AG04450 (cell line): ENCODE measurements at regions of chr5 and their contacts with region 1.

Region 1: DNA sequence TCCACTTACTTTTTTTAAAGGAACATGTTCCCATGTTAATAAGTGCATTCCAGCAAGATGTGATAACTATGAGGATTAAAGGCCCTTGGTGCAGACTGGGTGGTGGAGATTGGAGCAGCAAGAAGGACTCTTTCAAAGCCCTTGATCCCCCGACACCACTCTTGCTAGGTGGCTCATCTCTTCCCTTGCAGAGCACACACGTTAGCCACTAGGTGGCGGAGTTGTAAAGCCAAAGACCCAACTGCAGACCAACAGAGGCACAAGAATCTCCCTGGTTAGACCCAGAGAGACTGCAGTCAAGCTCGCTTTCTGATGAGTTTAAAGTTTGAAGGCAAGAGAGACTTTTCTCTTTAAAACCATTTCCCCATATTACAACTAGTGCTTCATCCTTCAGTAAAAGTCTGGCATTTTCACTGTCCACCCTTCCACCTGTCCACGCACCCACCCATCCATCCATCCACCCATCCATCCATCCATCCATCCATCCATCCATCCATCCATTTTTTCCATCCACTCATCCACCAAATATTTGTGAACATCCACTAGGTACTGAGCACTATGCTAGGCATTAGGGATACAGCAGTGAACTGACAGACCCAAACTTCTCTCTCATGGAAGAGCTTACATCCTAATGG is 226.9 kb downstream of the MSX2 start:
- DNase-seq: peak; percentile 67
- H3K4me3 ChIP-seq: no peak overlapping the region
- H3K27ac ChIP-seq: no peak overlapping the region
- H3K27me3 ChIP-seq: no peaks in the 10 kb centered on the region
- CTCF ChIP-seq: peak; percentile 93

Region 2: GRCh38 chr5:174816860-174817259 is 134.4 kb before region 1 on chr5:
- CTCF ChIA-PET with region 1: no interaction called
- POLR2A ChIA-PET with region 1: no interaction called
- DNase-seq: no peak
- H3K4me3 ChIP-seq: no peak overlapping the region
- H3K27ac ChIP-seq: no peak overlapping the region
- H3K27me3 ChIP-seq: no peaks in the 10 kb centered on the region
- CTCF ChIP-seq: peak; percentile 48

Region 3: DNA sequence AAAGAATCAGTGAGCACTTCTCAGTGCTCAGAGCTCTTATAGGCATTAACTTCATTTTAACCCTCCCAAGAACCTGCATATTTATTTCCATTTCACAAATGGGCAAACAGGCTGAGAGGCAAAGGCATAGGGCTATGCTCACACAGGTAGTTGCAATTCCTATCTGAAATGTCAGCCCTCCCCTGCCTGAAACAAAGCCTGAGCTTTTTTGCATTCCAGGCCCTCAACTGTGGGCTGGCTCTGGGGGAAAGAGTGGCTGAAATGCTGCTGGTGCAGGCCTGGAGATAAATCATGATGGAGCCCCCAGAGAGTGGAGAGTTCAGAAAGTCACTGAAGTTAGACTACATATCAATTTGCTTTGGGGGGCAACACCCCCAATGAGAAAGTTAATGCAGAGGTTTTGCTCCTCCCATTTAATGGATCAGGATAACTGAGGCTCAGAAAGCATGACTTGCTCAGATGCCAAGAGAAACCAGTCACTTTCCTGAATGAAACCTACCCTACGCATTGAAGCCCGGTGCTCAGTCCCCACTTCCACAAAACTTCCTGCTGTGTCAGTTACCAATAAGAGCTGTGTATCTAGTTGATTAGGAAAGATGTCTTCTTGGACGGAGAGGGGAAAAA is 487.1 kb after region 1 on chr5:
- CTCF ChIA-PET with region 1: interaction called, 51 read pairs
- POLR2A ChIA-PET with region 1: no interaction called
- DNase-seq: no peak
- H3K4me3 ChIP-seq: no peak overlapping the region
- H3K27ac ChIP-seq: no peak overlapping the region
- H3K27me3 ChIP-seq: peaks cover 2% of the 10 kb centered on the region
- CTCF ChIP-seq: no peak

Region 4: GRCh38 chr5:175444060-175444904 is 493.0 kb after region 1 on chr5 and contains the start of gene DRD1:
- CTCF ChIA-PET with region 1: interaction called, 51 read pairs
- POLR2A ChIA-PET with region 1: no interaction called
- DNase-seq: no peak
- H3K4me3 ChIP-seq: peak within 1 kb of the TSS; percentile 49
- H3K27ac ChIP-seq: no peak within 1 kb of the TSS
- H3K27me3 ChIP-seq: peaks cover 10% of the 10 kb centered on the region
- CTCF ChIP-seq: peak; percentile 61
- polyA plus RNA-seq, gene DRD1: 0.11 TPM in 2 replicates

Region 5: GRCh38 chr5:175464074-175464941 is 513.0 kb after region 1 on chr5:
- CTCF ChIA-PET with region 1: interaction called, 33 read pairs
- POLR2A ChIA-PET with region 1: no interaction called
- DNase-seq: no peak
- H3K4me3 ChIP-seq: no peak overlapping the region
- H3K27ac ChIP-seq: no peak overlapping the region
- H3K27me3 ChIP-seq: peaks cover 19% of the 10 kb centered on the region
- CTCF ChIP-seq: peak; percentile 84